ENCODE measurements at regions of chr10 and their contacts with region 1.

Region 1: DNA sequence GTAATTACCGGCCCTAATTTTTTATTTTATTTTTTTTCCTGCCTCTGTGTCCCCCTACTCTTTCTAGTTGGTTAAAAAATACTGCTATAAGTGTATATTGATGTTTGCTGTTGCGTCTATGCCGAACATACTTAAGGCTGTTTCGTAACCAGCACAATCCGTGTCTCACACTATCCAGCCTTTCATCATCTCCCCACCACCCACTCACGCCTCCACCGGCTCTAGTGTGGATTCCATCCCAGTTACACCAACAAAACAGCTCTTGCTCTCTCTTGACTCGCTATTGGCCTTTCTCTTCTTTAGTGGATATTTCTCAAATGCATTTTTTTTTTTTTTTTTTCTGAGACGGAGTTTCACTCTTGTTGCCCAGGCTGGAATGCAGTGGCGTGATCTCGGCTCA is 70.1 kb upstream of the CAMK1D start:
- DNase-seq: no peak
- ATAC-seq: no peak
- H3K4me3 ChIP-seq: no peak overlapping the region
- H3K27ac ChIP-seq: no peak overlapping the region
- H3K4me1 ChIP-seq: no peaks in the 10 kb centered on the region
- H3K27me3 ChIP-seq: no peaks in the 10 kb centered on the region
- CTCF ChIP-seq: no peak
- POLR2A ChIP-seq: no peak
- RAD21 ChIP-seq: no peak

Region 2: DNA sequence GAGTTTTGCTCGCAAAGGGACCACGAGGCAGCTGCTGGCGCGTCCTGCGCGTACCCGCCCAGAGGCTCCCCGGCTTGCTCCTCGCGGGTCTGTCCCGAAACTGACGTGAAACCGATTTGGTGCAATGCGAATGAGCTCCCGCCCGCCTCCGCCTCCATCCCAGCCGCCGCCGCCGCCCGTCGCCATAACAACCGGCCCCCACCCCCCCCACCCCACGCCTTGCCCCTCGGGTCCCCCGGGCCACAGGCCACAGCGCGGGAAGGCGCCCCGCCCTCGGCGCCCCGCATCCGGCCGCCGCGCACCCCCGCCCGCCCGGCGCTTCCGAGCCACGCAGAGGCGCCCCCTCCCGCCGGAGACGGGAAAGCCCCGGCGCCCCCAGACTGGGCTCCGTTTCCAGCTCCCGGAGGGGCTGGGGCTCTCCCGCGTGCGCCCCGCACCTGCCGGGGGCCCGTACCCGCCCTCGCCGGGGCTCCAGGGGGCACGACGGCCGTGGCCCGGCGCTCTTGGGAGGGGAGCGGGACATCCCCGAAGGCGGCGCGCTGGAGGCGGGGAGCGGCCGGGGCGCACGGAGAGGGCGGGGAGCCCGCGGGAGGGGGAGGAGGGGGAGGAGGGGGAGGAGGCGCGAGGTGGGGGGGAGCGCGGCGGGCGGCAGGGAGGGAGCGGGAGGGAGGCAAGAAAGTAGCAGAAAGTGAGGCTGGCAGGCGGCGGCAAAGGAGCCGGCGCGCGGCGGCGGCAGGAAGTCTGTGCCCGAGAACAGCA is 69.8 kb after region 1 on chr10 and contains the start of gene CAMK1D:
- CTCF ChIA-PET with region 1: no interaction called
- POLR2A ChIA-PET with region 1: no interaction called
- RAD21 ChIA-PET with region 1: no interaction called
- intact Hi-C with region 1: loop called (anchors 10 kb)
- DNase-seq: no peak
- ATAC-seq: peak; percentile 72
- H3K4me3 ChIP-seq: peak within 1 kb of the TSS; percentile 70 to 88
- H3K27ac ChIP-seq: peak within 1 kb of the TSS; percentile 54; the same call in 1 of the 2 replicates
- H3K4me1 ChIP-seq: peaks cover 6 to 27% of the 10 kb centered on the region in 2 experiments; a peak in 3 of 4 replicates
- H3K27me3 ChIP-seq: no peaks in the 10 kb centered on the region
- CTCF ChIP-seq: peak in 1 of 3 experiments; percentile 28; a peak in 2 of 6 replicates
- POLR2A ChIP-seq: no peak
- RAD21 ChIP-seq: no peak
- total RNA-seq, gene CAMK1D: 9.6 TPM